Activated naive CD4-positive, alpha-beta T cell treated with anti-CD3 and anti-CD28 coated beads for 36 hours (primary cell): ENCODE measurements at regions of chr16 and their contacts with region 1.

Region 1: GRCh38 chr16:3503523-3503922 is 2.7 kb downstream of the CLUAP1 start:
- DNase-seq: peak; percentile 73
- H3K4me3 Mint-ChIP-seq: peak overlapping the region; percentile 88
- H3K27ac Mint-ChIP-seq: peak overlapping the region; percentile 89
- H3K4me1 Mint-ChIP-seq: peaks cover 68% of the 10 kb centered on the region
- H3K27me3 Mint-ChIP-seq: no peaks in the 10 kb centered on the region

Region 2: GRCh38 chr16:2520092-2520783 is 983.3 kb before region 1 on chr16 and contains the start of gene AMDHD2:
- CTCF ChIA-PET with region 1: no interaction called
- intact Hi-C with region 1: loop called (anchors 5 kb)
- DNase-seq: peak; percentile 92
- H3K4me3 Mint-ChIP-seq: peak within 1 kb of the TSS; percentile 82
- H3K27ac Mint-ChIP-seq: peak within 1 kb of the TSS; percentile 77
- H3K4me1 Mint-ChIP-seq: peaks cover 51% of the 10 kb centered on the region
- H3K27me3 Mint-ChIP-seq: no peaks in the 10 kb centered on the region
- total RNA-seq, gene AMDHD2: 15.3 to 18.6 TPM

Region 3: GRCh38 chr16:3099732-3100499 is 403.6 kb before region 1 on chr16:
- CTCF ChIA-PET with region 1: no interaction called
- intact Hi-C with region 1: loop called (anchors 2 kb)
- DNase-seq: peak; percentile 97
- H3K4me3 Mint-ChIP-seq: peak overlapping the region; percentile 69
- H3K27ac Mint-ChIP-seq: no peak overlapping the region
- H3K4me1 Mint-ChIP-seq: peaks cover 36% of the 10 kb centered on the region
- H3K27me3 Mint-ChIP-seq: no peaks in the 10 kb centered on the region

Region 4: GRCh38 chr16:3173892-3174617 is 329.5 kb before region 1 on chr16:
- CTCF ChIA-PET with region 1: no interaction called
- intact Hi-C with region 1: loop called (anchors 2 kb)
- DNase-seq: peak; percentile 62
- H3K4me3 Mint-ChIP-seq: peak overlapping the region; percentile 70
- H3K27ac Mint-ChIP-seq: peak overlapping the region; percentile 50
- H3K4me1 Mint-ChIP-seq: peaks cover 40% of the 10 kb centered on the region
- H3K27me3 Mint-ChIP-seq: peaks cover 57% of the 10 kb centered on the region

Region 5: GRCh38 chr16:3400779-3401688 is 102.5 kb before region 1 on chr16 and contains the starts of genes ZNF174 and ZSCAN32:
- CTCF ChIA-PET with region 1: interaction called, 4 read pairs
- intact Hi-C with region 1: loop called (anchors 1 kb)
- DNase-seq: peak; percentile 99
- H3K4me3 Mint-ChIP-seq: peak within 1 kb of the TSS; percentile 86
- H3K27ac Mint-ChIP-seq: peak within 1 kb of the TSS; percentile 75
- H3K4me1 Mint-ChIP-seq: peaks cover 39% of the 10 kb centered on the region
- H3K27me3 Mint-ChIP-seq: no peaks in the 10 kb centered on the region
- total RNA-seq, gene ZNF174: 5.8 to 6.3 TPM
- total RNA-seq, gene ZSCAN32: 6.5 to 7.9 TPM

Region 6: DNA sequence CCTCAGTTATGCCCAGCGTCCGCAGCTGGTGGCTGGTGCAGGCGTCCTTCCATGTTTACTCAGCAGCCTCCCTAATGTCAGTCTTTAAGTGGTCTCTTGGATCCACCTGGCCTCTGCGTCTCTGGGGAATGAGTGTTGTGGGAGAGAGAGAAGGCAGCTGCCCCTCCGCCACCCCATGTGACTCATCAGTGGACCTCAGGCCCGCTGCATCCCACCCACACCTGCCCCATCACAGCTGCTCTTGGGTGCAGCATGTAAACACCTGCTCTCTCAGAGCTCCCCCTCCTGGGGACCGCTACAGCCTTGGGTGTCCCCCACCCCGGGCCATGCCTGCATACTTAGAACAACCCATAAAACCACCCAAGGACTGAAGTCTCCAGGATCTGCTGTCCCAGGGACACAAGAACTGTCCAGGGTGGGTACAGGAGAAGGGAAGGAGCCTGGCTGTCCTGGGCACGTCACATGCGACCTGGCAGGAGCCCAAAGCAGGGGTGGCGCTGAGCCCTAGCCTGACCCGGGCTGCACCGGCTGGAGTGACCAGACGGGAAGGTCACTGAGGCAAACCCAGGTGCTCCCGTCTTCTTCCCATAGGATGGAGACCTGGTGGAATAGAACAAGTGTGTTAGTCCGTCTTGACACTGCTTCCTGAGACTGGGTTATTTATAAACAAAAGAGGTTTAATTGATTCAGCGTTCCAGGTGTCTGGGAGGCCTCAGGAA is 12.5 kb before region 1 on chr16:
- CTCF ChIA-PET with region 1: no interaction called
- intact Hi-C with region 1: no loop called
- DNase-seq: no peak
- H3K4me3 Mint-ChIP-seq: no peak overlapping the region
- H3K27ac Mint-ChIP-seq: no peak overlapping the region
- H3K4me1 Mint-ChIP-seq: no peaks in the 10 kb centered on the region
- H3K27me3 Mint-ChIP-seq: no peaks in the 10 kb centered on the region

Region 7: GRCh38 chr16:3578610-3579551 is 75.4 kb after region 1 on chr16:
- CTCF ChIA-PET with region 1: no interaction called
- intact Hi-C with region 1: loop called (anchors 2 kb)
- DNase-seq: peak; percentile 77
- H3K4me3 Mint-ChIP-seq: peak overlapping the region; percentile 95
- H3K27ac Mint-ChIP-seq: peak overlapping the region; percentile 78
- H3K4me1 Mint-ChIP-seq: peaks cover 41% of the 10 kb centered on the region
- H3K27me3 Mint-ChIP-seq: no peaks in the 10 kb centered on the region

Region 8: DNA sequence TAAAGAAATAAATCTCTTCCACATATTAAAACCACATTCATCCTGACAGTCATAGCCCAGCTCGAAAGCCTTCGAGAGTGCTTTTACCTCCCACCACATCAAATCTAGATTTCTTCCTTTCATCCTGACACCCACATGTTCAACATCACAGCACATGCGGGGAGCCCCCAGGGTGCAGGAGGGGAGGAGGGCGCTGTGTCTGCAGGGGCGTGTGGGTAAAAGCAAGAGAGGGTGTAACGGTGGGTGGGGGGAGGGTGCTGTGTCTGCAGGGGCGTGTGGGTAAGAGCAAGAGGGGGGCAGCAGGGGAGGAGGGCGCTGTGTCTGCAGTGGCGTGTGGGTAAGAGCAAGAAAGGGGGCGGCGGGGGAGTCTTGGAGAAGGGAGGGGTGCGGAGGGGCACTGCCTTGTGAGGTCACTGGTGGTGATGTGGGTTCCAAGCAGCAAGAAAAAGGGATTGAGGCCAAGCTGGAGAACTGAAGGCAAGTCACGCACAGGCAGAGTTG is 578.0 kb after region 1 on chr16:
- CTCF ChIA-PET with region 1: no interaction called
- intact Hi-C with region 1: loop called (anchors 5 kb)
- DNase-seq: peak; percentile 84
- H3K4me3 Mint-ChIP-seq: peak overlapping the region; percentile 35
- H3K27ac Mint-ChIP-seq: peak overlapping the region; percentile 48
- H3K4me1 Mint-ChIP-seq: peaks cover 51% of the 10 kb centered on the region
- H3K27me3 Mint-ChIP-seq: no peaks in the 10 kb centered on the region